ENCODE measurements at regions of chr3 and their contacts with region 1.

Region 1: DNA sequence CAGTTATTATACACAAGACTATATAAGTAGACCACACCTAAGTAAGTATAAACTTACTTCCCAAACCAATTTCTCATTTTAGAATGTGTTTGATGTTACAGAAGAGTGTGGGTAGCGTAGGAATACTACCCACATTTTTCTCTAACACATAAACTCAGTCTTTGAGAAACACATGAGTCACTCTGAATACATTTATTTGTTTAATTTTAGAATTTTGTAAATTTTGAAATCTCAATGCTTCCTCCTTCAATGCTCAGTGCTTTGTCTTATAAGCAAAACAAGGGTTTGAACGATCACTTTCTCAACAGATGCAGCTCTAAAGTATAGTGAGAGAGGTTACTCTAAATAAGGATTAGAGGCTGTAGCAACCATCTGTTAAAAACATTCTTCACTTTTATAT is 700.8 kb downstream of the SI start:
- DNase-seq: no peak

Region 2: DNA sequence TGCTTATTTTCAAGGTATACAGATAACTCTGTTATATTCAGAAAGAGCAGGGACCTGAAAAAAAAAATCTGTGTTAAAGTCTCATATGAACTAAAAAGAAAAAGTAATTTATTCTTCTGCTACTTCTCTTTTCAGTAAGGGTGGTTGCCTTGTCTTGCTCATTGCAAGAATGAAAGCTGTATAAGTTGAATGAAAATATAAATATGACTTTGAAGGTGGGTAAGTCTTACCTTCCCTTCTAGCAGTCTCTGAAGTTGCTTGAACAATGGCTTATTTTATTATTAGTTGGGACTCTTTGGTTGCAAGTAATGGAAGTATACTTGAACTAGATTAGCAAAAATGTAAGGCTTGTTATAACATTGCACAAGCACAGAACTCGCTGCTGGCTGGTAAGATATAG is 854.1 kb before region 1 on chr3:
- intact Hi-C with region 1: no loop called
- DNase-seq: no peak

Region 3: GRCh38 chr3:164351131-164351530 is 26.3 kb before region 1 on chr3:
- intact Hi-C with region 1: no loop called
- DNase-seq: no peak

Region 4: DNA sequence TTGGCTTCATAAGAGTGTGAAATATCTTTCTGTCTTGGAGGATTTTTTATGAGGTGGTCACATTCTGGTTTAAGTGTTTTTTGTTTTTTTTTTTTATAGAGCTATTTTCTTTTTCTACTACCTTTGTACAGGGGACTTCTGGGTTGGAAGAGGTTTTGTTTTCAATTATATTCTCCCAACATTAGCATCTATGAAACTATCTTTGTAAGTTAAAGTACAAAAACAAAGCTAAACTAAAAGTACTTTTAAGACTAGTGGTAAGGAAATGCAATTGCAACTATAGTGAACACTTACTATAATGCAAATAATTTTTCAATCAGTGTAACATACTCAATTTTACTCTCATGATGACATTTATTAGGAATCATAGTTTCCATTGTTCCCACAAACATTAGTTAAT is 12.6 kb after region 1 on chr3:
- intact Hi-C with region 1: loop called in 1 of 2 experiments (anchors 1 kb)
- DNase-seq: no peak

Region 5: DNA sequence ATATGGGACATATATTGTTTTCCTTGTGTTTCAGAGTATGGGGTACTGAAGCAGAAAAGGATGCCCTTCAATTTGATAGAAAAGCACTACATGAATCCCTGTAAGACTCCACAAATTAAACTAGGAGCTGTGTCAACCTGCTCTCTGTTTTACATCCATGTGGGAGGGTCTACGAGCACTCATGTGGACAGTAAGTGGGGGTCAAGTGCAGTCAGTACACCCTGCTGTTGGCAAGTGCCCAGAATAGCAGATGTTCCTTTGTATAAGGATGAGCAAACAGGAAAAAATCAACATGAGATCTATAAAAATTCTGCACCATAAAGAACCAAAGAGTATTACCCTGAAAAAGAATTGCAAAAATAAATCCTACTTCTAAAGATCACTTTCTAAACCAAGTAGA is 40.9 kb after region 1 on chr3:
- intact Hi-C with region 1: no loop called
- DNase-seq: no peak

Region 6: DNA sequence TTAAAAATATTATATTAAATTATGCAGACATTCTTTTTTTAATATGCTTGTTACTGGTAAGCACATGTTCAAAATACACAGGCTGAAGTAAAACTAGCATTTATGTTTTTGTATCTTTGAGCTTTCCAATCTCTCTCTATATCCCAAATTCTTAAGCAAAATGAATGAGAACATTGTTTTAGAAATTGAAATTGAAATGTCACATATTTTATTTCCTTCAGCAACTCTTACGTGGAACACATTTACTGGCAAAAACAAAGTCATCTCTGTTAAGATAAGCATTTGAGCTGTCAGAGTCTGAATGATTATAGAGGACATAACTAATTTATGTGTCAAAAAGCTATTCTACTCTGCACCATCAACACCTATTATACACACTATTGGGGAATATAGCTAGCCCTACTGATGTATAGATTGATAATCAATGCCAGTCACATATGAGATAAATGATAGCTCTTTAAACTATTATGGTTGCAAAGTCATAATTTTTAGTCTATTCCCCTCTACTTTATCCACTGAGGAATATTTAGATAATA is 1995.2 kb after region 1 on chr3:
- intact Hi-C with region 1: no loop called
- DNase-seq: no peak

Measured in posterior vena cava (tissue), 2 donors.